ENCODE measurements at regions of chr2 and their contacts with region 1.

Region 1: DNA sequence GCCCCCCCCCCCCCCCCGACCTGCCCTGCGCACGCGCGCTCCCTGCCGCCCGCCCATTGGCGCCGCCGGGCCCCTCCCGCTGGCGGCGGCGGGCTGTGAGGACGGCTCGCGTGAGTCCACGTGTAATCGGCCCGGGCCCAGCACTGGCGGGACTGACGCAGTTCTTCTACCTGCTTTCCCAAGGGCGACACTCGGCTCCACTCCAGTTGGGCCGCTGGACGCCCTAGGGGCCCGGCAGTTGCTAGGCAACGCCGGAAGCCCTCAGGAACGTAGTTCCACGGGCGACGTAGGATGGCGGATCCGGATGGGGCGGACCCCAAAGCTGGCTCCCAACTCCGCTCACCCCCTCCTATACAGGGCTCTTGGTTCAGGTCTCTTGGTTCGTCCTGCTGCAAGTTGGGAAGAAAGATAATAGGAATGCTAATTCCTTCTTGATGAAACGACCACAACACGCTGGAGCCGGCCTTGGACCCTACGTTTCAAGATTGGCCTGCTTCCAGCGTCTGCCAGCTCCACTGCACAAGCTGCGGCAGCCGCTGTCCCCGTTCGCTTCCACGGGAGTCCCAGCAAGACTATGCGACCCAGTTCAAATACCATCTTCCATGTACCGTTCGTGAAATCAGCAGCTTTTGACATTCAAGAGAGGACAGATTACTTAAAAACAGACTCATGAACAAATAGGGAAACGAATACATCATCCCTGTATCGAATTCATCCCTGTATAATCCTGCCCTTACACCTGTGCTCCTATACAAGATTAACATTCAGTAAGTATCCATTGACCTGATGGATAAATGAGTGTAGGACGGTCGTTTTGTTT is 415 bp upstream of the MCFD2 start:
- DNase-seq: peak; percentile 83 to 91 (median 88)
- H3K4me3 ChIP-seq: peak overlapping the region; percentile 70 to 85
- H3K4me3 Mint-ChIP-seq: peak overlapping the region; percentile 88 to 98 (median 92)
- H3K27ac ChIP-seq: peak overlapping the region; percentile 82
- H3K27ac Mint-ChIP-seq: peak overlapping the region; percentile 81 to 99 (median 95)
- H3K4me1 ChIP-seq: peaks cover 43% of the 10 kb centered on the region
- H3K4me1 Mint-ChIP-seq: peaks cover 35 to 56% (median 48%) of the 10 kb centered on the region in 4 donors
- H3K27me3 ChIP-seq: no peaks in the 10 kb centered on the region
- H3K27me3 Mint-ChIP-seq: no peaks in the 10 kb centered on the region

Region 2: DNA sequence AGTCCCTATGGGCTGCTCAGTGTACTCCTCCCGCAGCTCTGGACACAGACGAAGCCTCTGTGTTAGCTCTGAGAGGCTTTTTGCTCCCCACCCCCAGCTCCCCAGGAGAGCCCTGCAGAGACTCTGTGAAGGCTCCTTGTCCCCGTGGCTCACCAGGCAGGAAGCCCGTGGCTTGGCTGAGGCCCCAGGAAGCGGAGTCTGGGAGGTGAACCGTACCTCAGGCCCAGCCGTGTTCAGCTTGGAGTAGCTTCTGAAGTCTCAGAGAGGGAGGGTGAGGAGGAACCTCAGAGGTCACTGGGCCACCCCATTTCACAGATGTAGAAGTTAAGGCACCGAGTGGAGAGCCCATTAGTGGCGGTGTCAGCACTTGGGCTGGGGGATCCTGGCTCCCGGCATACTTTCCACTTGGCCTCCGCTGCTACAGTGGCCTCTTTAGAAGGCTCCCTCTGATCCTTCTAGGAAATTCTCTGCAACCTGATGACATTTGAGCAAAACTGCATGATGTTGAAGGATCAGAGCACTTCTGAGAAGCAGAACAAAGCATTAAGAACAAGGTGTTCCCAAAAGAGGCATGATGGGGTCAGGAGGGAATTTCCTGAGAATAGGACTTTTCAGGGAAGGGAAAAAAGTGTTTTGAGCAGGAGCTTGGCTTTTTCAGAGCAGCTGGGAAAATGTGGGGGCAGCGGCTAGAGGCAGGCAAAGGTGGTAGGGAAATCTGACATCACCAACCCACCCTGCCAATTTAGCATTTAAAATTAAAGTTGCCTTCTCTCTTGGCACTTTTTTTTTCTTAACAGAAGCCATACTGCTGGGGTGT is 79.5 kb before region 1 on chr2:
- CTCF ChIA-PET with region 1: no interaction called
- POLR2A ChIA-PET with region 1: no interaction called
- intact Hi-C with region 1: no loop called
- DNase-seq: no peak
- H3K4me3 ChIP-seq: no peak overlapping the region
- H3K4me3 Mint-ChIP-seq: no peak overlapping the region
- H3K27ac ChIP-seq: no peak overlapping the region
- H3K27ac Mint-ChIP-seq: no peak overlapping the region
- H3K4me1 ChIP-seq: no peaks in the 10 kb centered on the region
- H3K4me1 Mint-ChIP-seq: peaks cover 0 to 1% (median 0%) of the 10 kb centered on the region in 4 donors
- H3K27me3 ChIP-seq: no peaks in the 10 kb centered on the region
- H3K27me3 Mint-ChIP-seq: peaks cover 0 to 3% of the 10 kb centered on the region in 2 donors

Region 3: GRCh38 chr2:46929612-46930011 is 13.6 kb after region 1 on chr2:
- CTCF ChIA-PET with region 1: interaction called, 43 read pairs
- POLR2A ChIA-PET with region 1: interaction called, 5 read pairs
- intact Hi-C with region 1: no loop called
- DNase-seq: no peak
- H3K4me3 ChIP-seq: no peak overlapping the region
- H3K4me3 Mint-ChIP-seq: no peak overlapping the region
- H3K27ac ChIP-seq: no peak overlapping the region
- H3K27ac Mint-ChIP-seq: no peak overlapping the region
- H3K4me1 ChIP-seq: no peaks in the 10 kb centered on the region
- H3K4me1 Mint-ChIP-seq: peaks cover 4 to 9% (median 6%) of the 10 kb centered on the region in 4 donors
- H3K27me3 ChIP-seq: no peaks in the 10 kb centered on the region
- H3K27me3 Mint-ChIP-seq: no peaks in the 10 kb centered on the region

Region 4: GRCh38 chr2:46942139-46942517 is 26.1 kb after region 1 on chr2:
- CTCF ChIA-PET with region 1: interaction called, 3 read pairs
- POLR2A ChIA-PET with region 1: no interaction called
- intact Hi-C with region 1: loop called (anchors 1 kb)
- DNase-seq: peak; percentile 74 to 89 (median 79)
- H3K4me3 ChIP-seq: peak overlapping the region; percentile 95 to 96
- H3K4me3 Mint-ChIP-seq: peak overlapping the region; percentile 97 to 100 (median 99)
- H3K27ac ChIP-seq: peak overlapping the region; percentile 100
- H3K27ac Mint-ChIP-seq: peak overlapping the region; percentile 98 to 100 (median 99)
- H3K4me1 ChIP-seq: peaks cover 55% of the 10 kb centered on the region
- H3K4me1 Mint-ChIP-seq: peaks cover 29 to 75% (median 47%) of the 10 kb centered on the region in 4 donors
- H3K27me3 ChIP-seq: no peaks in the 10 kb centered on the region
- H3K27me3 Mint-ChIP-seq: no peaks in the 10 kb centered on the region

Region 5: GRCh38 chr2:46984642-46985476 is 68.8 kb after region 1 on chr2:
- CTCF ChIA-PET with region 1: interaction called, 14 read pairs
- POLR2A ChIA-PET with region 1: interaction called, 4 read pairs
- intact Hi-C with region 1: no loop called
- DNase-seq: peak in 1 of 5 donors; percentile 50
- H3K4me3 ChIP-seq: no peak overlapping the region
- H3K4me3 Mint-ChIP-seq: peak overlapping the region in 7 of 8 donors; percentile 55 to 80 (median 72)
- H3K27ac ChIP-seq: peak overlapping the region; percentile 42
- H3K27ac Mint-ChIP-seq: peak overlapping the region; percentile 85 to 97 (median 94)
- H3K4me1 ChIP-seq: peaks cover 48% of the 10 kb centered on the region
- H3K4me1 Mint-ChIP-seq: peaks cover 23 to 53% (median 36%) of the 10 kb centered on the region in 4 donors
- H3K27me3 ChIP-seq: no peaks in the 10 kb centered on the region
- H3K27me3 Mint-ChIP-seq: no peaks in the 10 kb centered on the region

Region 6: GRCh38 chr2:47088316-47088667 is 172.3 kb after region 1 on chr2:
- CTCF ChIA-PET with region 1: no interaction called
- POLR2A ChIA-PET with region 1: no interaction called
- intact Hi-C with region 1: no loop called
- DNase-seq: no peak
- H3K4me3 ChIP-seq: no peak overlapping the region
- H3K4me3 Mint-ChIP-seq: no peak overlapping the region
- H3K27ac ChIP-seq: no peak overlapping the region
- H3K27ac Mint-ChIP-seq: no peak overlapping the region
- H3K4me1 ChIP-seq: no peaks in the 10 kb centered on the region
- H3K4me1 Mint-ChIP-seq: no peaks in the 10 kb centered on the region
- H3K27me3 ChIP-seq: no peaks in the 10 kb centered on the region
- H3K27me3 Mint-ChIP-seq: peaks cover 2% of the 10 kb centered on the region in 2 donors

Region 7: GRCh38 chr2:47272031-47272864 is 356.2 kb after region 1 on chr2:
- CTCF ChIA-PET with region 1: interaction called, 6 read pairs
- POLR2A ChIA-PET with region 1: no interaction called
- intact Hi-C with region 1: loop called (anchors 2 kb)
- DNase-seq: peak; percentile 45 to 55 (median 49)
- H3K4me3 ChIP-seq: peak overlapping the region in 1 of 2 donors; percentile 32
- H3K4me3 Mint-ChIP-seq: peak overlapping the region; percentile 51 to 77 (median 64)
- H3K27ac ChIP-seq: no peak overlapping the region
- H3K27ac Mint-ChIP-seq: peak overlapping the region in 1 of 7 donors; percentile 32
- H3K4me1 ChIP-seq: no peaks in the 10 kb centered on the region
- H3K4me1 Mint-ChIP-seq: peaks cover 0 to 8% (median 3%) of the 10 kb centered on the region in 4 donors
- H3K27me3 ChIP-seq: no peaks in the 10 kb centered on the region
- H3K27me3 Mint-ChIP-seq: no peaks in the 10 kb centered on the region

Region 8: DNA sequence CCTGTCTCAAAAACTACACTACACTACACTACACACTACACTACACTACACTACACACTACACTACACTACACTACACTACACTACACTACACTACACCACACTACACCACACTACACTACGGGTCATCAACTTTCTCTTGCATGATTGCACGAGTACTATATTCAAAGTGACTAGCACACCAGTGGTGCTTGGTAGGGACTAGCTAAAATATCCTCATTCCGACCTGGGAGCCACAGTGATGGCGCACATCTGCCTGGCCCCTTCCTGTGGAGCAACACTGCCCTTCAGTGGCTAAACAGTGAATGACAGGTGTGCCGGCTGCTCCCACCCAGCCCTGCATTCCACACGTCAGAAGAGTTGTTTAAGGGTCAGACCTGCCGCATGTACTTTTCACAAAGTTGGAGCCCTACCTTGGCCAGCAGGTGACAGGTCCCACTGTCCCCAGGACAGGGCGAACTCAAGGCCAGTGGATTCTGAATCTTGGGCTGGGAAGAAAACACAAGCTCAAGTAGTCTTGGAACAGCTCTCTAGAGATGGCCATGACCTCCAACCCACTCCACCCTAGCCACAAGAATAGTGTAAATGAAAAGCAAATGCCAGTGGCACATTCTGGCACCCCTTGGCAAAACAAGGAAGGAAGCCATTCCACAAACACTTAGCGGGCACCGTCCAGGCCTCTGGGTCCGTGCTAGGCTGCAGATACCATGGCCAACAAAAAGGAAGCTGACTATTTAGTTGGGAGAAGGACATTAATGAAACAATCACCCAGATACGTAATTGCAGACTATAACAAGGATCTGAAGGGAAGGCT is 407.2 kb after region 1 on chr2:
- CTCF ChIA-PET with region 1: no interaction called
- POLR2A ChIA-PET with region 1: no interaction called
- intact Hi-C with region 1: loop called (anchors 1 kb)
- DNase-seq: peak; percentile 44 to 57 (median 50)
- H3K4me3 ChIP-seq: no peak overlapping the region
- H3K4me3 Mint-ChIP-seq: no peak overlapping the region
- H3K27ac ChIP-seq: no peak overlapping the region
- H3K27ac Mint-ChIP-seq: no peak overlapping the region
- H3K4me1 ChIP-seq: no peaks in the 10 kb centered on the region
- H3K4me1 Mint-ChIP-seq: no peaks in the 10 kb centered on the region
- H3K27me3 ChIP-seq: no peaks in the 10 kb centered on the region
- H3K27me3 Mint-ChIP-seq: peaks cover 7% of the 10 kb centered on the region in 2 donors

Region 9: GRCh38 chr2:47402805-47403608 is 487.0 kb after region 1 on chr2 and contains the start of gene MSH2:
- CTCF ChIA-PET with region 1: no interaction called
- POLR2A ChIA-PET with region 1: no interaction called
- intact Hi-C with region 1: loop called (anchors 5 kb)
- DNase-seq: peak; percentile 89 to 91 (median 90)
- H3K4me3 ChIP-seq: peak within 1 kb of the TSS; percentile 71 to 80
- H3K4me3 Mint-ChIP-seq: peak within 1 kb of the TSS; percentile 97 to 99 (median 98)
- H3K27ac ChIP-seq: peak within 1 kb of the TSS; percentile 66
- H3K27ac Mint-ChIP-seq: peak within 1 kb of the TSS; percentile 83 to 96 (median 94)
- H3K4me1 ChIP-seq: peaks cover 27% of the 10 kb centered on the region
- H3K4me1 Mint-ChIP-seq: peaks cover 27 to 47% (median 35%) of the 10 kb centered on the region in 4 donors
- H3K27me3 ChIP-seq: no peaks in the 10 kb centered on the region
- H3K27me3 Mint-ChIP-seq: no peaks in the 10 kb centered on the region
- total RNA-seq, gene MSH2: 26.2 to 26.4 TPM

Region 10: DNA sequence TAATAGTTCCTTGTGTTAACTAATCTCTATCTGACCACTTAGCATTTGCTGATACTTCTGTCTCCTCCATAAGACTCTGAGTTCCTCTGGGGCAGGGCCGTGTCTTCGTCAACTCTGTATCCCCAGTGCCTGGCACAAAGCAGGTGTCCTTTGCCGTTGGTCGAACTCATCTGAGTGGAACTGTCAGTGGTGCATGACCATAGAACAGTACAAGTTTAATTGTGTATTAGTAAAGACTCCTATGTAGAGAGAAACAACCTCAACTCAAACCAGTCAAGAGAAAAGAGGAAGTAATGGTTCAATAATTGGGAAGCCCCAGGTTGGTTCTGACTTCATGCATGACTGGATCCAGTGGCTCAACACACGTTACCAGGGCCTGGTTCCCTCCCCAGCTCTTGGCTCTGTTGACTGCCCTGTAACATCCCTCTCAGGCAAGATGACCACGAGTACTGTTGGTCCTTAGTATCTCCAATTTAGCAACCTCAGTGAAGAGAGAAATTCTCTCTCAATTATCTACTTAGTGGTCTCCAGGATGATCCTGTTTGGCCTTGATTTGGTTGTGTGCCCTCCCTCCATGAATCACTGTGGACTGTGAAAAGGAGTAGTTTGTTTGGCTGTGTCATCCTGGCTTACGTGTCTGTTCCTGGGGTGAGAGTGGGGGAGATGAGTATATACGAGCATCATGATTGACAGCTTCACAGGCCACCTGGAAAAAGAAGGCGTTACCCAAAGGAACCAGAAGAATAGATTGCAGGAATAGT is 808.4 kb after region 1 on chr2:
- CTCF ChIA-PET with region 1: no interaction called
- POLR2A ChIA-PET with region 1: no interaction called
- intact Hi-C with region 1: no loop called
- DNase-seq: no peak
- H3K4me3 ChIP-seq: no peak overlapping the region
- H3K4me3 Mint-ChIP-seq: no peak overlapping the region
- H3K27ac ChIP-seq: no peak overlapping the region
- H3K27ac Mint-ChIP-seq: no peak overlapping the region
- H3K4me1 ChIP-seq: no peaks in the 10 kb centered on the region
- H3K4me1 Mint-ChIP-seq: no peaks in the 10 kb centered on the region
- H3K27me3 ChIP-seq: no peaks in the 10 kb centered on the region
- H3K27me3 Mint-ChIP-seq: no peaks in the 10 kb centered on the region

Measured in CD4-positive, alpha-beta memory T cell (primary cell).